PC-9 (cell line): ENCODE measurements at regions of chr21 and their contacts with region 1.

Region 1: GRCh38 chr21:17542371-17543011 is 29.6 kb downstream of the CXADR start:
- DNase-seq: no peak
- H3K4me3 ChIP-seq: no peak overlapping the region
- H3K27ac ChIP-seq: no peak overlapping the region
- H3K4me1 ChIP-seq: peaks cover 5% of the 10 kb centered on the region; the same call in 1 of the 2 replicates
- H3K27me3 ChIP-seq: no peaks in the 10 kb centered on the region
- CTCF ChIP-seq: no peak

Region 2: GRCh38 chr21:16775076-16775475 is 767.4 kb before region 1 on chr21:
- CTCF ChIA-PET with region 1: no interaction called
- POLR2A ChIA-PET with region 1: no interaction called
- intact Hi-C with region 1: no loop called
- DNase-seq: no peak
- H3K4me3 ChIP-seq: no peak overlapping the region
- H3K27ac ChIP-seq: no peak overlapping the region
- H3K4me1 ChIP-seq: no peaks in the 10 kb centered on the region
- H3K27me3 ChIP-seq: no peaks in the 10 kb centered on the region
- CTCF ChIP-seq: no peak

Region 3: DNA sequence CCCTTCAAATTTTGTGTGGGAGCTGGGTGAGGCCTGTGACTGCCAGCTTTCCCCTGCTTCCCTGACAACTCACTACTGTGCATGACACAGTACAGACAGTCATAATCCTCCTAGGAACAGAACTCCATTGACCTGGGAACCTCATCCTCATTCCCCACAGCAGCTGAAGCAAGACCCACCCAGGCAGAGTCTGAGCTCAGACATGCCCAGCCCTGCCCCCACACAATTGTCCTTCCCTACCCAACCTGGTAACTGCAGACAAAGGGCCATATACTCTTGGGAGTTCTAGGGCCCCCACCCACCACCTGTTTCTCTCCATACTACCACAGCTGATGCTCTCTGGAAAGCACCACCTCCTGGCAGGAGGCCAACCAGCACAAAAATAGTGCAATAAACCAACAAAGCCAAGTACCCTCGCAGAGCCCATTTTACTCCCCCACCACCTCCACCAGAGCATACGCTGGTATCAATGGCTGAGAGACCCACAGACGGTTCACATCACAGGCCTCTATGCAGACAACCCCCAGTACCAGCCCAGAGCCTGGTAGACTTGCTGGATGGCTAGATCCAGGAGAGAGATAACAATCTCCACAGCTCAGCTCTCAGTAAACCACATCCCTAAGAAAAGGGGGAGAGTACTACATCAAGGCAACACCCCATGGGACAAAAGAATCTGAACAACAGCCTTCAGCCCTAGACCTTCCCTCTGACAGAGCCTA is 189.4 kb before region 1 on chr21:
- CTCF ChIA-PET with region 1: interaction called, 13 read pairs
- POLR2A ChIA-PET with region 1: no interaction called
- intact Hi-C with region 1: no loop called
- DNase-seq: no peak
- H3K4me3 ChIP-seq: no peak overlapping the region
- H3K27ac ChIP-seq: no peak overlapping the region
- H3K4me1 ChIP-seq: no peaks in the 10 kb centered on the region
- H3K27me3 ChIP-seq: no peaks in the 10 kb centered on the region
- CTCF ChIP-seq: no peak

Region 4: DNA sequence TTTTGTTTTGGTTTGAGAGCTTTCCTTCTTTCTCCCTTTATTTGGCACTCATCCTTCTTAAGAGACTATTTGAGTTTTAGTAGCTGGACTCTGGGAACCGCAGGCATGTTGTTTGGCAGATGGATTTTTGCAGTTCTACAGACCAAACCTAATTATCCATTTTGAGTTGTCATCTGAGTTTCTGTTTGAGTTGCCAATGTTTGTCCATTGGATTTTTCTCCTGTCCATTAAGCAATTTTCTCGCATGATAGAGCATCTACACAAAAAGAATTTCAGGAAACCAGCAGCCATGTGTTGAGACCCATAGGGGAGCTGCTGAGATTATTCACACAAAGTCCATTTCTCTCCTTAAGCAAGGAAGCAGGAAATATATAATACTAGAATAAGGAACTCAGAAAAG is 46.8 kb before region 1 on chr21:
- CTCF ChIA-PET with region 1: no interaction called
- POLR2A ChIA-PET with region 1: interaction called, 38 read pairs
- intact Hi-C with region 1: no loop called
- DNase-seq: peak in 1 of 2 experiments; percentile 92
- H3K4me3 ChIP-seq: no peak overlapping the region
- H3K27ac ChIP-seq: no peak overlapping the region
- H3K4me1 ChIP-seq: peaks cover 54% of the 10 kb centered on the region
- H3K27me3 ChIP-seq: no peaks in the 10 kb centered on the region
- CTCF ChIP-seq: no peak

Region 5: GRCh38 chr21:17527240-17527639 is 15.3 kb before region 1 on chr21:
- CTCF ChIA-PET with region 1: no interaction called
- POLR2A ChIA-PET with region 1: no interaction called
- intact Hi-C with region 1: no loop called
- DNase-seq: peak; percentile 34 to 96
- H3K4me3 ChIP-seq: no peak overlapping the region
- H3K27ac ChIP-seq: peak overlapping the region; percentile 48
- H3K4me1 ChIP-seq: peaks cover 61% of the 10 kb centered on the region
- H3K27me3 ChIP-seq: no peaks in the 10 kb centered on the region
- CTCF ChIP-seq: no peak

Region 6: DNA sequence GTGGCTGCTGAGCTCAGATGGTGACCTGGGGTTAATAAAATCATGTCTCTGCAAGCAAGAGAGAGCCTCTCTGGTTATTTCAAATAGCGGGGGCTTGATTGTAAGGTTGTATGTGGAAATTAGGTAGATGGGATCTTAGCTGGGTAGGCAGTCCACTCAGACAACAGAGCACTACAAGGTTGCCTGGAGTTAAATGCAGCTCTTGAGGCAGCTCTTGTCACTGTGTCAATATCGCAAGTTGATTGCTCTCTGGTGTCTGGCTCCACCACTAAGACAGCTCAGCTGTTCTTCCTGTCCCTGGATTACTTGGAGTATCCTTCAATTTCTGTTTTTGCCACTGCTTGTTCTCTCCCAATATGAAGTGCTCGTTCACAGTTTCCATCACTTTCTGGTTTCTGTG is 182.8 kb after region 1 on chr21:
- CTCF ChIA-PET with region 1: no interaction called
- POLR2A ChIA-PET with region 1: no interaction called
- intact Hi-C with region 1: no loop called
- DNase-seq: no peak
- H3K4me3 ChIP-seq: no peak overlapping the region
- H3K27ac ChIP-seq: no peak overlapping the region
- H3K4me1 ChIP-seq: no peaks in the 10 kb centered on the region
- H3K27me3 ChIP-seq: no peaks in the 10 kb centered on the region
- CTCF ChIP-seq: no peak